Adrenal gland (tissue), 19 donors: ENCODE measurements at regions of chr2 and their contacts with region 1.

Region 1: GRCh38 chr2:231900486-231900942 is 25.7 kb downstream of the NPPC start:
- DNase-seq: peak; percentile 74 to 89 (median 83)
- H3K4me3 ChIP-seq: no peak overlapping the region
- H3K27ac ChIP-seq: no peak overlapping the region
- H3K4me1 ChIP-seq: no peaks in the 10 kb centered on the region
- H3K27me3 ChIP-seq: no peaks in the 10 kb centered on the region
- CTCF ChIP-seq: peak; percentile 68 to 83 (median 76)
- POLR2A ChIP-seq: no peak

Region 2: GRCh38 chr2:231732604-231733003 is 167.9 kb before region 1 on chr2:
- intact Hi-C with region 1: no loop called
- DNase-seq: no peak
- H3K4me3 ChIP-seq: no peak overlapping the region
- H3K27ac ChIP-seq: no peak overlapping the region
- H3K4me1 ChIP-seq: no peaks in the 10 kb centered on the region
- H3K27me3 ChIP-seq: no peaks in the 10 kb centered on the region
- CTCF ChIP-seq: no peak
- POLR2A ChIP-seq: no peak

Region 3: GRCh38 chr2:232438951-232439757 is 538.6 kb after region 1 on chr2:
- intact Hi-C with region 1: loop called (anchors 2 to 5 kb)
- DNase-seq: peak in 5 of 7 donors; percentile 8 to 55 (median 35)
- H3K4me3 ChIP-seq: no peak overlapping the region
- H3K27ac ChIP-seq: no peak overlapping the region
- H3K4me1 ChIP-seq: peaks cover 3 to 4% of the 10 kb centered on the region in 2 donors
- H3K27me3 ChIP-seq: no peaks in the 10 kb centered on the region
- CTCF ChIP-seq: peak in 4 of 6 experiments; percentile 44 to 62 (median 54)
- POLR2A ChIP-seq: no peak

Region 4: GRCh38 chr2:232521959-232522622 is 621.6 kb after region 1 on chr2:
- intact Hi-C with region 1: loop called in 1 of 2 experiments (anchors 10 kb)
- DNase-seq: peak in 4 of 7 donors; percentile 41 to 66 (median 61)
- H3K4me3 ChIP-seq: peak overlapping the region in 1 of 4 donors; percentile 29
- H3K27ac ChIP-seq: no peak overlapping the region
- H3K4me1 ChIP-seq: peaks cover 7 to 23% of the 10 kb centered on the region in 2 donors
- H3K27me3 ChIP-seq: peaks cover 36% of the 10 kb centered on the region
- CTCF ChIP-seq: peak; percentile 30 to 95 (median 70)
- POLR2A ChIP-seq: no peak